GM12878 (cell line): ENCODE measurements at regions of chr4 and their contacts with region 1.

Region 1: DNA sequence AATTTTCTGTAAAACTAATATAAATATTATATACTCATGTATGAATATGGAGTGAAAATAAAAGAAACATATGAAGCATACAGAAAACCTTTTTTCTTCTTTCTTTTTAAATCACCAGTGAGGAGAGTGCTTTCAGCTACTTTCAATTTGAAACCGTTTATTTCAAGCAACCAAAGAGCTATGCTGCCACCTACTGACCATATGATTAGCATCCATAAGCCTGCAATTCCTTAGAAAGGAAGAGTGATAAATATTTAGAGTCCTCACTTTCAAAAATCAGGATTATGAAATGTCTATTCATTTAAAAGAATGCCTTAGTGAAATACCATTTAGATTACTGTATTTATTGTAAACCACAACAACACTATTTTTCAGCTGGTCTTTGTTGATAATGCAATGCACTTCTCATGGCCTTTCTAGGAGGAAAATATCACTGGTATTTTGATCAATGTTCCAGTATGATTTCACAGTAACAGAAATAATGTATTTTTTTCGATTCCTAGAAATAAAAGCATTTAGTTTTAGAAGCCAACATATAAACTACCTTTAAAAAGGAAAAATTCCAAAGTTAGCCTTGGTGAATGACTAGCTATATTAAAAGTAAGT is 667.6 kb downstream of the PCDH18 start:
- DNase-seq: peak; percentile 24
- ATAC-seq: peak; percentile 92
- H3K4me3 ChIP-seq: no peak overlapping the region
- H3K27ac ChIP-seq: no peak overlapping the region
- H3K4me1 ChIP-seq: no peaks in the 10 kb centered on the region
- H3K27me3 ChIP-seq: no peaks in the 10 kb centered on the region
- CTCF ChIP-seq: peak; percentile 62 to 81 (median 69); a peak in 5 of 6 replicates
- EP300 ChIP-seq: no peak
- POLR2A ChIP-seq: no peak
- RAD21 ChIP-seq: peak; percentile 94

Region 2: DNA sequence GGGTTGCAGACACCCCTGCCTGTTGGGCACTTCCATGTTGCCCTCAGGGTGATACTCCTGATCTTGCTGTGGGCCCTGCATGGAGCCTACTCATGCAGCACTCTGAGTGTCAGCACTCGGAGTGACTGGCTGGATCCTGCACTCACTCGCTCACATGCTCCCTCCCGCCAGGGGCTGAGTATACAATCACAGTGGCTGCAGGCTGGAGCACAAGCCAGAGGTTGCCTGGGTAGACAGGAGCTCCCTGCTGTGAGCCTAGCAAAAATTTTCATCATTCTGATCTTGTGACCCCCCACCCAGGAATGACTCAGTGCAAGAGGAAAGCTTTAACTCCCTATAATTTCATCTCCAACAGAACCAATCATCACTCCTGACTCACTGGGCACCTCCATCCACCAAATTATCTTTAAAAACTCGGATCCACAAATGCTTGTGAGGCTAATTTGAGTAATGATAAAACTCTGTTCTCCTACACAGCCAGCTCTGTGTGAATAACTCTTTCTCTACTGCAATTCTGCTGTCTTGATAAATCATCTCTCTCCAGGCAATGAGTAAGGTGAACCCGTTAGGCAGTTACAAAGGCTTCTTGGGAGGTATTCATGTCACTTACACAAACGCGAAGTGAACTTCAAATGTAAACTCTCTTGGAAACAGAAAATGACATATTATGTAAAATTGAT is 1482.3 kb before region 1 on chr4:
- CTCF ChIA-PET with region 1: no interaction called
- POLR2A ChIA-PET with region 1: no interaction called
- RAD21 ChIA-PET with region 1: no interaction called
- SMC1A ChIA-PET with region 1: no interaction called
- in situ Hi-C with region 1: loop called (anchors 25 kb)
- intact Hi-C with region 1: no loop called
- DNase-seq: no peak
- ATAC-seq: peak; percentile 39
- H3K4me3 ChIP-seq: no peak overlapping the region
- H3K27ac ChIP-seq: no peak overlapping the region
- H3K4me1 ChIP-seq: no peaks in the 10 kb centered on the region
- H3K27me3 ChIP-seq: no peaks in the 10 kb centered on the region
- CTCF ChIP-seq: no peak
- EP300 ChIP-seq: no peak
- POLR2A ChIP-seq: no peak
- RAD21 ChIP-seq: no peak

Region 3: GRCh38 chr4:136442447-136442846 is 422.2 kb before region 1 on chr4:
- CTCF ChIA-PET with region 1: interaction called, 10 read pairs
- POLR2A ChIA-PET with region 1: no interaction called
- RAD21 ChIA-PET with region 1: interaction called, 3 read pairs
- SMC1A ChIA-PET with region 1: no interaction called
- in situ Hi-C with region 1: no loop called
- intact Hi-C with region 1: no loop called
- DNase-seq: no peak
- ATAC-seq: no peak
- H3K4me3 ChIP-seq: no peak overlapping the region
- H3K27ac ChIP-seq: no peak overlapping the region
- H3K4me1 ChIP-seq: no peaks in the 10 kb centered on the region
- H3K27me3 ChIP-seq: no peaks in the 10 kb centered on the region
- CTCF ChIP-seq: no peak
- EP300 ChIP-seq: no peak
- POLR2A ChIP-seq: no peak
- RAD21 ChIP-seq: no peak

Region 4: DNA sequence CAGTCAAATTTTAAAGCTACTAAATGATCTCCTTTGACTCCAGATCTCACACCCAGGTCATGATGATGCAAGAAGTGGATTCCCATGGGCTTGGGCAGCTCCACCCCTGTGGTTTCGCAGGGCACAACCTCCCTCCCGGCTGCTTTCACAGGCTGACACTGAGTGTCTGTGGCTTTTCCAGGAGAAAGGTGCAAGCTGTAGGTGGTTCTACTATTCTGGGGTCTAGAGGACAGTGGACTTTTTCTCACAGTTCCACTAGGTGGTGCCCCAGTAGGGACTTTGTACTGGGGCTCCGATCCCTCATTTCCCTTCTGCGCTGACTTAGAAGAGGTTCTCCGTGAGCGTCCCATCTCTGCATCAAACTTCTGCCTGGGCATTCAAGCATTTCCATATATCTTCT is 177.6 kb before region 1 on chr4:
- CTCF ChIA-PET with region 1: interaction called, 32 read pairs
- POLR2A ChIA-PET with region 1: no interaction called
- RAD21 ChIA-PET with region 1: interaction called, 20 read pairs
- SMC1A ChIA-PET with region 1: interaction called, 20 read pairs
- in situ Hi-C with region 1: no loop called
- intact Hi-C with region 1: loop called (anchors 5 kb)
- DNase-seq: no peak
- ATAC-seq: peak; percentile 49
- H3K4me3 ChIP-seq: no peak overlapping the region
- H3K27ac ChIP-seq: no peak overlapping the region
- H3K4me1 ChIP-seq: no peaks in the 10 kb centered on the region
- H3K27me3 ChIP-seq: no peaks in the 10 kb centered on the region; a peak in 1 of 4 replicates
- CTCF ChIP-seq: peak in 2 of 3 experiments; percentile 18 to 21; a peak in 2 of 6 replicates
- EP300 ChIP-seq: no peak
- POLR2A ChIP-seq: no peak
- RAD21 ChIP-seq: no peak

Region 5: DNA sequence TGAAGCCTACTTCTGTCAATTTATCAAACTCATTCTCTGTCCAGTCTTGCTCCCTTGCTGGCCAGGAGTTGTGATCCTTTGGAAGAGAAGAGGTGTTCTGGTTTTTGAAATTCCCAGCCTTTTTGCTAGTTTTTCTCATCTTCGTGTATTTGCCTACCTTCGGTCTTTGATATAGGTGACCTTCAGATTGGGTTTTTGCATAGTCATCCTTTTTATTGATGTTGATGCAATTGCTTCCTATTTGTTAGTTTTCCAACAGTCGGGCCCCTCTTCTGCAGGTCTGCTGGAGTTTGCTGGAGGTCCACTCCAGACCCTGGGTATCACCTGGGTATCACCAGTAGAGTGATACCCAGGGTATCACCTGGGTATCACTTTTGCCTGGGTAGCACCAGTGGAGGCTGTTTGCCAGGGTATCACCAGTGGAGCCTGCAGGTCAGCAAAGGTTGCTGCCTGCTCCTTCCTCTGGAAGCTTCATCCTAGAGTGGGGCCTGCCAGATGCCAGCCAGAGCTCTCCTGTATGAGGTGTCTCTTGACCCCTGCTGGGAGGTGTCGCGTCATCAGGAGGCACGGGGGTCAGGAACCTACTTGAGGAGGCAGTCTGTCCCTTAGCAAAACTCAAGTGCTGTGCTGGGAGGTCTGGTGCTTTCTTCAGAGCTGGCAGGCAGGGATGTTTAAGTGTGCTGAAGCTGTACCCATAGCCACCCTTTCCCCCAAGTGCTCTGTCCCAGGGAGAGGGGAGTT is 16.6 kb before region 1 on chr4:
- CTCF ChIA-PET with region 1: interaction called, 15 read pairs
- POLR2A ChIA-PET with region 1: no interaction called
- RAD21 ChIA-PET with region 1: interaction called, 3 read pairs
- SMC1A ChIA-PET with region 1: interaction called, 17 read pairs
- in situ Hi-C with region 1: no loop called
- intact Hi-C with region 1: no loop called
- DNase-seq: no peak
- ATAC-seq: no peak
- H3K4me3 ChIP-seq: no peak overlapping the region
- H3K27ac ChIP-seq: no peak overlapping the region
- H3K4me1 ChIP-seq: no peaks in the 10 kb centered on the region
- H3K27me3 ChIP-seq: no peaks in the 10 kb centered on the region
- CTCF ChIP-seq: no peak
- EP300 ChIP-seq: no peak
- POLR2A ChIP-seq: no peak
- RAD21 ChIP-seq: no peak